Dorsolateral prefrontal cortex (tissue), 120 donors: ENCODE measurements at regions of chr1 and their contacts with region 1.

Region 1: DNA sequence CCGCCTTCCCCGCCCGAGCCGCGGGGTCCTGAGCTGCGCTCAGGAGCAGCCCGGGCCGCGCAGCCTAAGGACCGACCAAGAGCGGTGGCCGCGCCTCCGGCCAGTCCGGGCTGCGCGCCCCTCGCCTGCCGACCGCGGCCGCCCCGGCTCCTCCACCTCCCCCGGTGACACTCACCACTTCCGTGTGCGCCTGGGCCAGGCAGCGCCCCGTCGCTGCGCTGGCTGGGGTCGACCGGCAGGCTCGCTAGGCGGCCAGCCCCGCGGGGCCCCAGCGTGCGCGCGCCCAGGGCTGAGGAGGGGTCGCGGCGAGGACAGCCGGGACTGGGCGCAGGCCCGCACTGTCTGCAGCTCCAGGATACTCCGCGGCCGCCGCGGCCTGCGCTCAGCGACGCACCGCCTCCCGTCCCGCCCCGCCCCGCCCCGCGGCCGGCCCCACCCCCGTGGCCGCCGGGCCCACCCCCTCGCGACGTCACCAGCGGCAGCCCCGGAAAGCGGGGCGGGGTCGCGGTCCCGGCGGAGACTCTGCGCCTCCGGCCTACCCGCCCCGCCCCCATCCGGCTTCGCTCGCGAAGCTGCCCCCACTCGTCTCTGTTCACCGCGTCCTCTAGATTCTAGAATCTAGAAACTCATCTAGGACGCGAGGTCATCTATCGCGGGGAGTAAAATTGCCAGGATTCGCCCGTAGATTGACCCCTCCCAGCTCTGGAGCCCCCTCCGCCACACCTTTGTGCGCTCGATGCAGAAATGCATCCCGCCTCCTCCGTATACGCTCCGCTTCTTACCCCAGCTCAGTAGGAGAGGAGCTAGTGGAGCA is at the start of gene JAK1:
- DNase-seq: peak; percentile 65 to 92 (median 83)
- H3K4me3 ChIP-seq: peak within 1 kb of the TSS; percentile 65 to 99 (median 87)
- H3K27ac ChIP-seq: peak within 1 kb of the TSS; percentile 39 to 96 (median 88)
- H3K27me3 ChIP-seq: no peaks in the 10 kb centered on the region
- CTCF ChIP-seq: peak in 8 of 56 donors; percentile 3 to 38 (median 14)
- total RNA-seq, gene JAK1: 57.7 to 112 (median 83.0) TPM

Region 2: DNA sequence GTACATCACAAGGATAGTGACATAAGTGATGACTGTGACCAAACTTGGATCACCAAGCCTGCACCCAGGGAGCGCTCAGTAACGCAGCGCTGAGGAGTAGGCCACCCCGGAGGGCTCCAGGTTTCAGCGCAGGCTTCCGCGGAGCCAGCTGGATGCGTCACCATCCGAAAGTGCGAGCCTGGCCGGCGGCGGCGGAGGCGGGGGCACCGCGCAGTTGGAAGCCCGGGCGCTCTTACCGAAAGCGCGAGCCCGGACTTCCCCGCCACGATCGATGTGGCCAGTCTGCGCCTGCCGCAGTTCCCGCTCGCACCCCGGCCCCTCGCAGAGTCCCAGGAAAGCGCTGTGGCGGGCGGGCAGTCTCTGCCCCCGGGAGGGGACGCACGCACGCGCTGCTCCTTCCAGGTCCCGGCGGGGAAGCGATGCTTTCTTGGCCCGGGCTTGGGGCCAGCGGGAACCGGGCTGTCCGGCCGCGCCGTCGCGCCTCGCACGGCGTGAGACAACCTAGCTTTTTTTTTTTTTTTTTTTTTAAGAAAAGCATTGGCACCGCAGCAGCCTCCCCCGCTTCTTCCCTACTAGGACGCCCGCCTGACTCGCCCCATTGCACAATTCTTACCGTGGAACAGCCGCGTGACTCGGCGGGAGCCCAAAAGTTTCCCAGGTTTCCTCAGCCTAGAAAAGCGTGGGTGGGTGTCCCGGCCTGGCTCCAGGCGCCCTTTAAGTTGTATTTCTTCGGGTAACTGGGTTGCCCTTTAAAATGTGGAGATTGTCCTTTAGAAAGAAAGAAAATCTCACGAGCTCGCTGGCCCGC is 36.3 kb after region 1 on chr1:
- intact Hi-C with region 1: loop called in 1 of 2 experiments (anchors 5 kb)
- DNase-seq: peak; percentile 49 to 89 (median 73)
- H3K4me3 ChIP-seq: peak overlapping the region; percentile 54 to 81 (median 67)
- H3K27ac ChIP-seq: peak overlapping the region in 58 of 59 donors; percentile 3 to 96 (median 86)
- H3K27me3 ChIP-seq: no peaks in the 10 kb centered on the region
- CTCF ChIP-seq: peak in 2 of 56 donors; percentile 14 to 17

Region 3: GRCh38 chr1:65020774-65021173 is 54.4 kb after region 1 on chr1:
- intact Hi-C with region 1: loop called in 1 of 2 experiments (anchors 10 kb)
- DNase-seq: no peak
- H3K4me3 ChIP-seq: no peak overlapping the region
- H3K27ac ChIP-seq: peak overlapping the region in 4 of 59 donors; percentile 2 to 40 (median 10)
- H3K27me3 ChIP-seq: no peaks in the 10 kb centered on the region
- CTCF ChIP-seq: peak in 45 of 56 donors; percentile 7 to 59 (median 42)